ENCODE measurements at regions of chr2 and their contacts with region 1.

Region 1: DNA sequence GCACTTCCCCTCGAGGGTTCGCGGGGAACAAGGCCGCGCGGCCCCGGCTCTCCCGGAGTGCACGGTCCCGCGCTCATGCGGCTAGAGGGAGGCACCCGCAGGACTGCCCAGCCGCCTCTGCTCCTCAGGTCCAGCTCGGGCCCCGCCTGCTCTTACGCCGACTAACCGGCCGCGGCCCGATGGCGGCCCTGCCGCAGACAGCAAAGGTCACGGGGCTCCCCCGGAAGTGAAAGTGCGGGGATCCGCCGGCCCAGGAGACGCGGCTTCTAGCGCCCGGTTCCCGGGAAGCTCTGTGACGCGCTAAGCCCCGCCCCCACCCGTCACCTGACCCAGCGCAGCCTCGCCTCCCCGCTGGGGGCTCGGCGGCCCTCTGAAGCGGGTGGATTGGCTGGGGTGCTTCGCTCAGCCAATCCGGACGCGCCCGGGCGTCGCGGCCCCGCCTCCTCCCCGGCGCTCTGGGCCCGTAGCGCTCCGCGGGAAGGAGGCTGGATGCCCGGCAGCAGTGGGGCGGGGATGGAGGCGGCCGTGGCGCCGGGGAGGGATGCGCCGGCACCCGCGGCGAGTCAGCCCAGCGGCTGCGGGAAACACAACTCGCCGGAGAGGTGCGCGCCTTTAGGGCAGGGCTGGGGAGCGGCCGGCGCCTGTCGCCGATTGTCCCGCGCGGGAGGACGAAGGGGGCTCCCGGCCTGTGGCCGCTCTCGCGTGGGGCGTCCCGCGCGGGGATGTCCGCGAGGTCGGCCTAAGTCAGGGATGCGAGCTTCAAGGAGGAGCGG is at the start of gene SCLY:
- DNase-seq: peak; percentile 98 to 100
- ATAC-seq: peak; percentile 100
- H3K4me3 ChIP-seq: peak within 1 kb of the TSS; percentile 32 to 74
- H3K27ac ChIP-seq: peak within 1 kb of the TSS; percentile 49 to 92
- H3K4me1 ChIP-seq: no peaks in the 10 kb centered on the region
- H3K27me3 ChIP-seq: no peaks in the 10 kb centered on the region
- total RNA-seq, gene SCLY: 14.1 to 15.4 TPM

Region 2: GRCh38 chr2:237752761-237753165 is 308.0 kb before region 1 on chr2:
- intact Hi-C with region 1: no loop called
- DNase-seq: no peak
- ATAC-seq: no peak
- H3K4me3 ChIP-seq: no peak overlapping the region
- H3K27ac ChIP-seq: no peak overlapping the region
- H3K4me1 ChIP-seq: no peaks in the 10 kb centered on the region
- H3K27me3 ChIP-seq: no peaks in the 10 kb centered on the region

Region 3: GRCh38 chr2:237966565-237967462 is 93.9 kb before region 1 on chr2 and contains the start of gene UBE2F:
- intact Hi-C with region 1: loop called (anchors 5 kb)
- DNase-seq: peak; percentile 99
- ATAC-seq: peak; percentile 98
- H3K4me3 ChIP-seq: peak within 1 kb of the TSS; percentile 94
- H3K27ac ChIP-seq: peak within 1 kb of the TSS in 1 of 2 donors; percentile 6
- H3K4me1 ChIP-seq: peaks cover 0 to 2% of the 10 kb centered on the region in 2 donors
- H3K27me3 ChIP-seq: no peaks in the 10 kb centered on the region
- total RNA-seq, gene UBE2F: 42.5 to 44.7 TPM

Region 4: DNA sequence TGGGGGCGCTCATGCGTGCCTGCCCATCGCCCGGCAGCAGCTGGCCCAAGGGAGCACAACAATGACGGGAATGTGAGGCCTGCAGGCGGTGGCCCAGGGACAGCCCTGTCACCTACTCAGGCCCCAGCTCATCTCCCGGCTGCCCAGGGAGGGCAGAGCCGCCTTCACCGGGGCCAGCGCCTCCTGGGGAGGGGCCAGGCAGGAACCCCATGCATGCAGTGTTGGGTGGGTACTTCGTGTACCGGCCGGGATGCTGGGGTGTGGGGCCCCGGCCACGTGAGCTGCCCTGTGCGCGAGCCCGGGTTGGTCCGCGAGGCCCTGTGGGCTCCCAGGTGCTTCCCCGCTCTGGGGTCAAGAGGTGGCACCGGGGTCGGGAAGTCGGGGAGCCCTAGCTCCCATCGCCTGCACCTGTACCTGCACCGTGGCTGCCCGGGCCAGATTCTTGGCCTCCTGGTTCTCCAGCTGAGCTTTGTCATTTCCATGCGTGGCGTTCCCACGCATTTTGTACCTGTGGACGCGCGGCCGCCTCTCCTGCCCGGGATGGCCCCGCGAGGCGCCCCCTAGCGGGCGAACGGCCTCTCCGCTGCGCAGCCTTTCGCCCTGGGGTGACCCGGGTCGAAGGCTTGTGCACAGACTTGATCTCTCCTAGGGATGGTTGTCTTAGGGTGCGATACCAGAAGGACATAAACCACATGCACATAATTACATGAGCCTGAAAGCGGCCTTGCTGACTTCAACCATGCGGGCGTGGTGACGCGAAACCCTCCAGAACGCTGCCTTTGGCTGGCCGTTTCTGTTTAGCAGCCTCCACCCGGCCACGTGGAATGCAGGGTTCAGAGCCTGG is 78.7 kb after region 1 on chr2:
- intact Hi-C with region 1: loop called in 1 of 2 experiments (anchors 5 kb)
- DNase-seq: no peak
- ATAC-seq: peak; percentile 3
- H3K4me3 ChIP-seq: peak overlapping the region; percentile 19 to 40
- H3K27ac ChIP-seq: no peak overlapping the region
- H3K4me1 ChIP-seq: no peaks in the 10 kb centered on the region
- H3K27me3 ChIP-seq: no peaks in the 10 kb centered on the region

Region 5: GRCh38 chr2:238263204-238264071 is 202.7 kb after region 1 on chr2:
- intact Hi-C with region 1: loop called in 1 of 2 experiments (anchors 10 kb)
- DNase-seq: peak; percentile 95 to 97
- ATAC-seq: peak; percentile 89
- H3K4me3 ChIP-seq: no peak overlapping the region
- H3K27ac ChIP-seq: no peak overlapping the region
- H3K4me1 ChIP-seq: no peaks in the 10 kb centered on the region
- H3K27me3 ChIP-seq: no peaks in the 10 kb centered on the region

Region 6: DNA sequence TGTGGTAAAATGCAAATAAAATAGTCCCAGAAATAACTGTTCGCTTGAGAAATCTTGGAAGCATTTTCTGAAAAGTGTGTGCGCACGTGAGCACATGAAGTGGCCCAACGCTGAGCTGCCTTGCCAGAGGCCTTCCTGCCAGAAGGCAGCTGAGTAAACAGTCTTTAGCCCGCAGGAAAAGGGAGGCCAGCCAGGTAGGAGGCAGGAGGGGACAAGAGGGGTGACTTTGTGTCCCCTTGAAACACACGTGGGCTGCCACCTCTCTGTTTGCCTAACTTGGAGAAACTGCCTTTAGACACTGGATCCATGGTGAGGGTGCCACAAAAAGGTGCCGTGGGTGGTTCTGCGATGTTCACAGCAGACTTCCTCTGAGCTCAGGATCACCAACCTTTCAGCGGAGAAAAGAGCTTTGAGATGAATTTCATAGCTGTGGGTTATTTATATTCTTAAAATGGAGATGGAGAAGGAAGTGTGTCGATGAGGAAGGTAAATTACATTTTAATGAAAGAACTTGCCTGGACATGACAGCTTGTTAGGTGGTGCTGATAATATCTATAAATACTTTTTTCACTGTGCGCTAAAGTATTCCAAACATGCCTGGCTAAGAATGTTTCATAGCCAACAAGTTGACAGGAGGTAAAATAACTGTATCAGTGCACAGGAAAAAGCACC is 329.3 kb after region 1 on chr2:
- intact Hi-C with region 1: no loop called
- DNase-seq: no peak
- ATAC-seq: no peak
- H3K4me3 ChIP-seq: no peak overlapping the region
- H3K27ac ChIP-seq: peak overlapping the region in 1 of 2 donors; percentile 87
- H3K4me1 ChIP-seq: no peaks in the 10 kb centered on the region
- H3K27me3 ChIP-seq: no peaks in the 10 kb centered on the region